Posterior vena cava (tissue), 2 donors: ENCODE measurements at regions of chr1 and their contacts with region 1.

Region 1: GRCh38 chr1:225474986-225475820 is 47.4 kb upstream of the LBR start:
- DNase-seq: peak; percentile 90

Region 2: GRCh38 chr1:225567590-225568194 is 92.5 kb after region 1 on chr1:
- intact Hi-C with region 1: loop called in 1 of 2 experiments (anchors 10 kb)
- DNase-seq: no peak

Region 3: DNA sequence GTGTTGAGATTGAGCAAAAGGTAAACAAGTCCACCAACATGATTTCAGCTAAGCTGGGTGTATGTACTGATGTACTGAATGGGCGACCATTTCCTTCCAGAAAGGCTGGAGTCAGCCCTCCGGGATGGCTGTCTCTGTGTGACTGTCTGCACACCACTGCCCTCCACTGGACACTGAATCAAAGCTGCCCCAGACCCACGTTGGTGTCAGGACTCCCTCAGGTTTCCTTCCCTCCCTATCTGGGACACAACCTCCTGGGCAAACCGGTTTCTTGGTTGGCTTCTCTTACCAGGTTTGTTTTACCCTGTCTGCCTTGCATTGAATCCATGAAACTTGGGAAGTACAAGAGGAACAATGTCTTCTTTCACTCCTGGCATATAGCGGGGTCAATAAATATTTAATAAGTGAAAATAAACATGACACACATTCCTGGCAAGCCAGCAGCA is 297.1 kb after region 1 on chr1:
- intact Hi-C with region 1: loop called (anchors 2 to 5 kb)
- DNase-seq: peak; percentile 90

Region 4: DNA sequence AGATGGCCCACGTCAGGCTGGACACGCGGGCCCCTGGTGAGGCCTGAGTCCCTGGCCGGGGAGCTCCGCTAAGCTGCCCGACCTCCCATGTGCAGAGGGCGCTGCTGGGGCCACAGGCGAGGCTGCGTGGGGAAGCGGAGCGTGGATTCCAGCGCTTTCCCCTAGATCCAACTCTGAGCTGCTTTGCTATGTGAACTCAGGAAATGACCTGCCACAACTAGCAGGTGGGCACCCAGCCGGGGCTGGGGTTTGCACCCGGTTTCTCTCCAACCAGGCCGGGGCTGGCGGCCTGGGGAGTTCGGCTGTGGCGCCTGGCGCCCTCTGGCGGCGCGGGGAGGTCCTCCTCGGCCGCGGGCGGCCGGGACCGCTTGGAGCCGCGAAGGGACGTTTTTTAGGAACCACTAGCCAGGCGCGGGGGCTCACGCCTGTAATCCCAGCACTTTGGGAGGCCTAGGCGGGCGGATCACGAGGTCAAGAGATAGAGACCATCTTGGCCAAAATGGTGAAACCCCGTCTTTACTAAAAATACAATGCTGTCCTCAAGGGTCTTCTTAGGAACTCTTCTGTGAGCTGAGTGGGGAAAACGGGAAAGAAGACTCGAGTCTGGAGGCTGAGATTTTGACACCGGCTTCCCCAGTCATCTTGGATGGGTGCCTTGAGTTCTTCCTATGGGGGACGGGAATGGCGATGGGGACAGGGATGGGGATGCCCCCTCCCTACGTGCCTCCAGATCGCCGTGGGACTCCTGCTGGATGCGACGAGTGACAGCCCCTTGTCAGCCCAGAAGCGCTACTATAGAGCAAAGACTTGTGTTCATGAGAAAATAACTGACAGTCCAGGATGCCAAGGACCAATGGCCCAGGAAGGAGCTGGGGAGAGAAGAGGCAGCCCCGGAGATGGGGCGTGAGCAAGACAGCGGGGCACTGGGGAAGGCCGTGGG is 436.3 kb after region 1 on chr1:
- intact Hi-C with region 1: loop called (anchors 5 kb)
- DNase-seq: peak; percentile 90

Region 5: DNA sequence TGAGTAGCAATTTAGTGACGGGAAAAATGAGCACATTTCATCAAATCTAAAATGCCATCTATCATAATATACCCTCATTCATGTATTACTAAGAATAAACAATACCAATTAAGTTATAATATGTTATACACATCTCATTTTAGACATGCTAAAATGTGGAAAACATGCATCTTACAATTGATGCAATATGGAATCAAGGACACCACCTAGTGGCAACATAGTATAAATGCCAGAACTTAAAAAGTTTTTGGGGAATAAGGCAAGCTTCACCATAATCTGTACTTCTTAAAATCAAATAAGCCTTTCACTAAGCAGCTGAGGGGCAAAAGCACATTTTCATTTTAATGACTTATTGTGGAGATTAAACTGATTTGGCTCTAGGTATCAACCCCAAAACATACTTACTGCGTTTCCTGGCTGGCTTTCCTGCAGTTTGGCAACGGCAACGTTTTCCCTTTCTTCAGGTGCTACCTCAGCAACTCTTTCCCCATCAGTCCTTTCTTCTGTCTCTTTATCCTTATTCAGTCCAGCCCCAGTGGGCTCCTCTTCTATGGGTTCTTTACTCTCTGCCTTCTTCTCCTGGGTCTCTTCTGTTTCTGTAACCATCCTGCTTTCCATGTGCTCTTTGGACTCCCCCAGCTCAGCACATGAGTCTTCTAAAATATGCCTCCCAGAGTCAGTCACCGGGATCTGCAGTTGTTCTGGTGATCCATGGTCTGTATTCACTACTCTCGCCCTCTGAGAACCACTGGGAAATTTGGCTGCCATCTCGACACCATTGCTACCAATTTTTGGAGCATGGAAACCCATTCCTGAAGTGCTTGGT is 512.5 kb after region 1 on chr1:
- intact Hi-C with region 1: loop called in 1 of 2 experiments (anchors 10 kb)
- DNase-seq: no peak